Activated CD8-positive, alpha-beta T cell treated with anti-CD3 and anti-CD28 coated beads for 36 hours (primary cell): ENCODE measurements at regions of chr4 and their contacts with region 1.

Region 1: GRCh38 chr4:3346146-3346545 is 53.3 kb downstream of the RGS12 start:
- DNase-seq: peak; percentile 57
- ATAC-seq: peak; percentile 85
- H3K4me3 Mint-ChIP-seq: no peak overlapping the region
- H3K27ac Mint-ChIP-seq: no peak overlapping the region
- H3K4me1 Mint-ChIP-seq: peaks cover 21% of the 10 kb centered on the region
- H3K27me3 Mint-ChIP-seq: no peaks in the 10 kb centered on the region
- CTCF ChIP-seq: peak; percentile 79

Region 2: GRCh38 chr4:3106339-3107186 is 239.6 kb before region 1 on chr4:
- CTCF ChIA-PET with region 1: no interaction called
- POLR2A ChIA-PET with region 1: no interaction called
- intact Hi-C with region 1: no loop called
- DNase-seq: peak; percentile 93
- ATAC-seq: peak; percentile 100
- H3K4me3 Mint-ChIP-seq: no peak overlapping the region
- H3K27ac Mint-ChIP-seq: peak overlapping the region; percentile 62
- H3K4me1 Mint-ChIP-seq: peaks cover 22% of the 10 kb centered on the region
- H3K27me3 Mint-ChIP-seq: no peaks in the 10 kb centered on the region
- CTCF ChIP-seq: peak; percentile 94

Region 3: GRCh38 chr4:3305598-3306371 is 40.4 kb before region 1 on chr4:
- CTCF ChIA-PET with region 1: no interaction called
- POLR2A ChIA-PET with region 1: no interaction called
- intact Hi-C with region 1: no loop called
- DNase-seq: peak; percentile 49
- ATAC-seq: peak; percentile 4
- H3K4me3 Mint-ChIP-seq: no peak overlapping the region
- H3K27ac Mint-ChIP-seq: peak overlapping the region; percentile 72
- H3K4me1 Mint-ChIP-seq: peaks cover 50% of the 10 kb centered on the region
- H3K27me3 Mint-ChIP-seq: peaks cover 15% of the 10 kb centered on the region
- CTCF ChIP-seq: no peak

Region 4: GRCh38 chr4:3369781-3370674 is 23.9 kb after region 1 on chr4:
- CTCF ChIA-PET with region 1: interaction called, 13 read pairs
- POLR2A ChIA-PET with region 1: no interaction called
- intact Hi-C with region 1: no loop called
- DNase-seq: peak; percentile 51
- ATAC-seq: peak; percentile 45
- H3K4me3 Mint-ChIP-seq: peak overlapping the region; percentile 35
- H3K27ac Mint-ChIP-seq: no peak overlapping the region
- H3K4me1 Mint-ChIP-seq: peaks cover 27% of the 10 kb centered on the region
- H3K27me3 Mint-ChIP-seq: peaks cover 22% of the 10 kb centered on the region
- CTCF ChIP-seq: no peak

Region 5: GRCh38 chr4:3384785-3385732 is 38.9 kb after region 1 on chr4:
- CTCF ChIA-PET with region 1: no interaction called
- POLR2A ChIA-PET with region 1: no interaction called
- intact Hi-C with region 1: no loop called
- DNase-seq: peak; percentile 14
- ATAC-seq: peak; percentile 30
- H3K4me3 Mint-ChIP-seq: no peak overlapping the region
- H3K27ac Mint-ChIP-seq: no peak overlapping the region
- H3K4me1 Mint-ChIP-seq: peaks cover 2% of the 10 kb centered on the region
- H3K27me3 Mint-ChIP-seq: peaks cover 3% of the 10 kb centered on the region
- CTCF ChIP-seq: no peak